CD4-positive, alpha-beta T cell (primary cell): ENCODE measurements at regions of chr9 and their contacts with region 1.

Region 1: GRCh38 chr9:97921959-97922724 is at the start of gene TRMO:
- DNase-seq: peak; percentile 96 to 100 (median 98)
- ATAC-seq: peak; percentile 76
- H3K4me3 ChIP-seq: peak within 1 kb of the TSS; percentile 76
- H3K4me3 Mint-ChIP-seq: peak within 1 kb of the TSS; percentile 88
- H3K27ac ChIP-seq: peak within 1 kb of the TSS; percentile 99
- H3K27ac Mint-ChIP-seq: peak within 1 kb of the TSS; percentile 96
- H3K4me1 ChIP-seq: peaks cover 43% of the 10 kb centered on the region
- H3K4me1 Mint-ChIP-seq: peaks cover 59% of the 10 kb centered on the region
- H3K27me3 ChIP-seq: no peaks in the 10 kb centered on the region
- H3K27me3 Mint-ChIP-seq: peaks cover 3% of the 10 kb centered on the region
- CTCF ChIP-seq: peak; percentile 67
- total RNA-seq, gene TRMO: 42.8 to 45.8 TPM

Region 2: GRCh38 chr9:97866848-97867247 is 55.3 kb before region 1 on chr9:
- CTCF ChIA-PET with region 1: no interaction called
- POLR2A ChIA-PET with region 1: no interaction called
- intact Hi-C with region 1: no loop called
- DNase-seq: no peak
- ATAC-seq: no peak
- H3K4me3 ChIP-seq: no peak overlapping the region
- H3K4me3 Mint-ChIP-seq: no peak overlapping the region
- H3K27ac ChIP-seq: no peak overlapping the region
- H3K27ac Mint-ChIP-seq: no peak overlapping the region
- H3K4me1 ChIP-seq: no peaks in the 10 kb centered on the region
- H3K4me1 Mint-ChIP-seq: no peaks in the 10 kb centered on the region
- H3K27me3 ChIP-seq: peaks cover 7 to 11% of the 10 kb centered on the region in 2 experiments
- H3K27me3 Mint-ChIP-seq: peaks cover 71% of the 10 kb centered on the region
- CTCF ChIP-seq: no peak

Region 3: DNA sequence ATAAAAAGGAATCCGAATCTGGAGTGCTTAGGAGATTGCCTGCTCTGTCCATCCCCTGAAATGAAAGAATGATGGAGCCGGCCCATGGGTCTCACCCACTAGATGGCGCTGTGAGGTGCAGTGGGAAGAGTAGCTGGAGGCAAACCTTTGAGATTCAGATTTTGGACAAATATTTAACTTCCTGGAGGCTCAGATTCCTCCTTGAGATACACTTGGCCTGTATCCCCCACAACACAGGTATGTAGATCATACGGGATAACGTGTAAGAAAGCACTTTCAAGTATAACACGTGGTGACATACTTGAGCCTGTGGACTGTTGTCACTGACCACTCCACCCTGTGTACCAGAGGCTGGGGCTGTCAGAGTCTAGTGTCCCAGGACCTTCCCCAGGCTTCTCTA is 32.1 kb before region 1 on chr9:
- CTCF ChIA-PET with region 1: interaction called, 60 read pairs
- POLR2A ChIA-PET with region 1: interaction called, 60 read pairs
- intact Hi-C with region 1: loop called (anchors 1 kb)
- DNase-seq: peak; percentile 53 to 82 (median 64)
- ATAC-seq: peak; percentile 74
- H3K4me3 ChIP-seq: no peak overlapping the region
- H3K4me3 Mint-ChIP-seq: no peak overlapping the region
- H3K27ac ChIP-seq: no peak overlapping the region
- H3K27ac Mint-ChIP-seq: peak overlapping the region; percentile 50
- H3K4me1 ChIP-seq: peaks cover 10% of the 10 kb centered on the region
- H3K4me1 Mint-ChIP-seq: peaks cover 12% of the 10 kb centered on the region
- H3K27me3 ChIP-seq: no peaks in the 10 kb centered on the region
- H3K27me3 Mint-ChIP-seq: no peaks in the 10 kb centered on the region
- CTCF ChIP-seq: peak; percentile 86

Region 4: DNA sequence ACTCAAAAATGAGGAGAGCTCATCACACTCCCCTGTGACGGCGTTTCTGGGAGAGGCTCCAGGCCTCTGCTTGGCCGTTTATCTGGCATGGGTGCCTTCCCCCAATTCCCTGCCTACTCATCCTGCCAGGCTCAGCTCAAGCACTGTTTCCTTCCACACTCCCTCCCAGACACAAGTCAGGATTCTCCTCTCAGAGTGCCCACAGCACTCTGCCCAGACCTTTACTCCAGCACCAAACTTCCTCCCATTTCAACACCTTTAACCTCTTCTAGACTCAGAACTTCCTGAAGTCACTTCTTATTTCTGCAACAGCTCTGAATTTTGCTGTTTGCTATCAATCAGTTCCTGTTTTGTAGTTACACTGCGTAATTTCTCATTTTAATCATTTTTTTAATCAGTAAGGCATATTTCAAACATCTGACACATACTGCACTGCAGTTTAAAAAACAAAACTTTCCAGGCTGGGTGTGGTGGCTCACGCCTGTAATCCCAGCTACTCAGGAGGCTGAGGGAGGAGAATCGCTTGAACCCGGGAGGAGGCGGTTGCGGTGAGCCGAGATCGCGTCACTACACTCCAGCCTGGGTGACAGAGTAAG is 15.8 kb before region 1 on chr9:
- CTCF ChIA-PET with region 1: interaction called, 221 read pairs
- POLR2A ChIA-PET with region 1: interaction called, 335 read pairs
- intact Hi-C with region 1: loop called (anchors 1 to 2 kb)
- DNase-seq: peak in 11 of 14 experiments; percentile 17 to 81 (median 58)
- ATAC-seq: peak; percentile 51
- H3K4me3 ChIP-seq: peak overlapping the region; percentile 44
- H3K4me3 Mint-ChIP-seq: peak overlapping the region; percentile 82
- H3K27ac ChIP-seq: peak overlapping the region; percentile 81 to 86
- H3K27ac Mint-ChIP-seq: peak overlapping the region; percentile 96
- H3K4me1 ChIP-seq: peaks cover 92% of the 10 kb centered on the region
- H3K4me1 Mint-ChIP-seq: peaks cover 94% of the 10 kb centered on the region
- H3K27me3 ChIP-seq: no peaks in the 10 kb centered on the region
- H3K27me3 Mint-ChIP-seq: no peaks in the 10 kb centered on the region
- CTCF ChIP-seq: no peak

Region 5: DNA sequence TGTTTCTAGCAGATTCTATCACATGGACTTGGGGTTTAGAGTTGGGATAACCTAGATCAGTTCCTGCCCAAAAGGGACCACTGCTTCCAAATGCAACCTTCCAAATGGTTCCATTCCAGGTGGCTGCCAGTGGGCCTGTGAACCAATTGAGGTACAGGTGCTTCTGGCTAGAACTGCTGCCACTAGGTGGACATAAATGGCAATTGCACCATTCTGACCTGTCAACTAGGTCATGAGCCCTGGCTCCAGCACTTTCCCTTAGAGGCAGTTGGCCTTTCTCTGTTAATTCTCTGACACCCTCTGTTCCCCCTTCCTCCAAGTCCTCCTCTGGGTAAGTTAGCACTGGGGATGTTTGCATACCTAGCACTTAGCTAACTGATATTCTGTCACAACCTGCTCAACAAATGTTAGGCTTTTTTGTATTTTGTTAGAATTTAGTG is 32.4 kb after region 1 on chr9:
- CTCF ChIA-PET with region 1: interaction called, 44 read pairs
- POLR2A ChIA-PET with region 1: interaction called, 20 read pairs
- intact Hi-C with region 1: loop called (anchors 1 kb)
- DNase-seq: peak; percentile 38 to 84 (median 48)
- ATAC-seq: peak; percentile 93
- H3K4me3 ChIP-seq: no peak overlapping the region
- H3K4me3 Mint-ChIP-seq: no peak overlapping the region
- H3K27ac ChIP-seq: no peak overlapping the region
- H3K27ac Mint-ChIP-seq: no peak overlapping the region
- H3K4me1 ChIP-seq: peaks cover 7% of the 10 kb centered on the region
- H3K4me1 Mint-ChIP-seq: peaks cover 4% of the 10 kb centered on the region
- H3K27me3 ChIP-seq: no peaks in the 10 kb centered on the region
- H3K27me3 Mint-ChIP-seq: no peaks in the 10 kb centered on the region
- CTCF ChIP-seq: peak; percentile 81

Region 6: GRCh38 chr9:98034593-98035546 is 112.7 kb after region 1 on chr9:
- CTCF ChIA-PET with region 1: interaction called, 12 read pairs
- POLR2A ChIA-PET with region 1: interaction called, 13 read pairs
- intact Hi-C with region 1: loop called (anchors 1 kb)
- DNase-seq: peak; percentile 82 to 97 (median 92)
- ATAC-seq: peak; percentile 99
- H3K4me3 ChIP-seq: no peak overlapping the region
- H3K4me3 Mint-ChIP-seq: no peak overlapping the region
- H3K27ac ChIP-seq: no peak overlapping the region
- H3K27ac Mint-ChIP-seq: no peak overlapping the region
- H3K4me1 ChIP-seq: peaks cover 6% of the 10 kb centered on the region
- H3K4me1 Mint-ChIP-seq: peaks cover 5% of the 10 kb centered on the region
- H3K27me3 ChIP-seq: no peaks in the 10 kb centered on the region
- H3K27me3 Mint-ChIP-seq: no peaks in the 10 kb centered on the region
- CTCF ChIP-seq: peak; percentile 86

Region 7: DNA sequence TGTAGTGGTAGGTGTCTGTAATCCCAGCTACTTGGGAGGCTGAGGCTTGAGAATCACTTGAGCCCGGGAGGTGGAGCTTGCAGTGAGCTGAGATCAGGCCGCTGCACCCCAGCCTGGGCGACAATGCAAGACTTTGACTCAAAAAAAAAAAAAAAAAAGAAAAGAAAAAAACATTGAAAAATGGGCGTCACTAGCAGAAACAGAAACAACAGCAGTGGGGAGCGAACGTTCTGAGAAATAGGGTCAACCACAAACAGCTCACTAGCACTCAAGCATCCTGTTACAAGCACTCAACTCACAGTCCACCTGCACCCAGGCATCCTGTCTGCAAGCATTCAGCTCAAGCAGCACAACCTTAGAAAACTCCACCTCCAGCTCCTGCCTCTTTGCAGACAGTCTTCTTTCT is 179.7 kb after region 1 on chr9:
- CTCF ChIA-PET with region 1: interaction called, 3 read pairs
- POLR2A ChIA-PET with region 1: interaction called, 23 read pairs
- intact Hi-C with region 1: loop called in 1 of 2 experiments (anchors 5 kb)
- DNase-seq: peak; percentile 63 to 96 (median 80)
- ATAC-seq: peak; percentile 94
- H3K4me3 ChIP-seq: peak overlapping the region; percentile 34
- H3K4me3 Mint-ChIP-seq: peak overlapping the region; percentile 71
- H3K27ac ChIP-seq: peak overlapping the region; percentile 74 to 79
- H3K27ac Mint-ChIP-seq: peak overlapping the region; percentile 91
- H3K4me1 ChIP-seq: peaks cover 95% of the 10 kb centered on the region
- H3K4me1 Mint-ChIP-seq: peaks cover 84% of the 10 kb centered on the region
- H3K27me3 ChIP-seq: no peaks in the 10 kb centered on the region
- H3K27me3 Mint-ChIP-seq: no peaks in the 10 kb centered on the region
- CTCF ChIP-seq: no peak

Region 8: GRCh38 chr9:98263482-98264357 is 341.6 kb after region 1 on chr9:
- CTCF ChIA-PET with region 1: interaction called, 8 read pairs
- POLR2A ChIA-PET with region 1: no interaction called
- intact Hi-C with region 1: loop called (anchors 1 to 2 kb)
- DNase-seq: peak; percentile 73 to 90 (median 82)
- ATAC-seq: peak; percentile 100
- H3K4me3 ChIP-seq: no peak overlapping the region
- H3K4me3 Mint-ChIP-seq: no peak overlapping the region
- H3K27ac ChIP-seq: no peak overlapping the region
- H3K27ac Mint-ChIP-seq: no peak overlapping the region
- H3K4me1 ChIP-seq: no peaks in the 10 kb centered on the region
- H3K4me1 Mint-ChIP-seq: no peaks in the 10 kb centered on the region
- H3K27me3 ChIP-seq: no peaks in the 10 kb centered on the region
- H3K27me3 Mint-ChIP-seq: peaks cover 9% of the 10 kb centered on the region
- CTCF ChIP-seq: peak; percentile 97